ENCODE measurements at regions of chr6 and their contacts with region 1.

Region 1: DNA sequence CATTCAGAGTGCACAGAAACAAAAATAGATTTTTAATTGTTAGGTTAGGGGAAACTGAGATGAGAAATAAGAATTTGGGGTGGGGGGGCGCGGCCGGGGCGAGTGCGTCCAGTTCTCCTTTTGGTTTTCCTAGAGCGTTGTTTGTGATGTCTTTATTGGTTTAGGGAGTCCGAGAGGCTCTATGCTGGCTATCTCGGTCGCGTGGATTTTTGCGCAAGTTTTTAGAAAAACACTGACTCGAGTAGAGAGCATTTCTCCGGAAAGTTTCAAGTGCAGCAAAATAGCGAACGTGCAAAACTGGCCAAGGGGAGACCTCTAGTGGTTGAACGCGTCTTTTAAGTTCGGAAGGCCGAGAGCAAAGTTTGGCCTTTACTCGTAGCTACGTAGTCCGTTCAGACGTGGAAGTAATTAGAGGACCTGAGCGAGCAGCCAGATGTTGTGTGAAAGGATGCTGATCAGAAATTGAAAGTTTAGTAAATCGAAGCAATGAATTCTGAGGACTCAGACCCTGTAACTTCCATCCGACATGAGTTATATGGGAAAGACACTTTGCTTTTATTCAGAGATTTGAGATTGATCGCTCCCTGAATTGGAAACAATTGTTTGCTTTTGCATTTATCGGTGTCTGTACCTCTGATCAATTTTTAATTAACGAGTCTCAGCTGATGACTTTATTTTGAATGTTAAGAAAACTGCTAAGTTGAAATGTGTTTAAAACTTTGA is 2.7 kb downstream of the L3MBTL3 start:
- DNase-seq: peak; percentile 91
- ATAC-seq: peak; percentile 62
- H3K4me3 Mint-ChIP-seq: peak overlapping the region; percentile 96
- H3K27ac Mint-ChIP-seq: peak overlapping the region; percentile 98
- H3K4me1 Mint-ChIP-seq: peaks cover 48% of the 10 kb centered on the region
- H3K27me3 Mint-ChIP-seq: no peaks in the 10 kb centered on the region

Region 2: DNA sequence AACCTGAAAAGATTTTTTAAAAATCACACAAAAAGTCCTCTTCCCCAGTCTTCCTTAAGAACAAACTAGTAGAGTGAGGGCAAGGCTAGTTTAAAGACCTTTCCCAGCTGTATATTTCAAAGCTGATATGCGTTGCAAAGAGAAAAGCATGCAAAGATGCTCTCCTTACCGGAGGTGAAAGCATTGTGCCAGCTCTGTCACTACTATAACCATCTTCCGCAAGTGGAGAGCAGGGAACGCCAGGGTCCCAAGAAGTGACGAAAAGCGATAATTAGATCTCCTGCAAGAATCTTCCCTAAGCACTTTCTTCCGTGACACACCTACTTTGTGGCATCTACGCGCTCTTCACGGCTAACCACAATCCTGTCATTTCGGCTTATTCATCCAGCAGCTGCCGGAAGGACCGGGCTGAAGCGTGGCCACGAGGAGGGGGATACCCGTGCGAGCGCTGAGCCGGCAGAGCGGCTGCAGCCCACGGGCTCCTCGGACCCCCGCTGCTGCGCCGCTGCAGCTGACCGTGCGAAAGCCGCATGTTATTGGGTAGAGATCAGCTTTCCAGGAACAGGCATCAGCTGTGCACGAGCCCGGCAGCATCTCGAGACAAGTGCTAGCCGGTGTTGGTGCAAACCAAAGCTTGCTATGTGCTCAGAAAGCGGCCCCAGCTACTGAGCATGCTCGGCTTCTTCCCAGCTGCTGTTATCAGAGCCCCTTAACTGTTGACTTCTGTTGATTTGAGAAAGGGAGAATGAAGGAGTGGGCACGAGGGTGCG is 253.9 kb before region 1 on chr6:
- CTCF ChIA-PET with region 1: interaction called, 11 read pairs
- POLR2A ChIA-PET with region 1: no interaction called
- DNase-seq: peak; percentile 77
- ATAC-seq: peak; percentile 88
- H3K4me3 Mint-ChIP-seq: peak overlapping the region; percentile 79
- H3K27ac Mint-ChIP-seq: peak overlapping the region; percentile 48
- H3K4me1 Mint-ChIP-seq: peaks cover 25% of the 10 kb centered on the region
- H3K27me3 Mint-ChIP-seq: peaks cover 41% of the 10 kb centered on the region

Region 3: GRCh38 chr6:129893640-129894039 is 127.4 kb before region 1 on chr6:
- CTCF ChIA-PET with region 1: interaction called, 18 read pairs
- POLR2A ChIA-PET with region 1: no interaction called
- DNase-seq: no peak
- ATAC-seq: no peak
- H3K4me3 Mint-ChIP-seq: no peak overlapping the region
- H3K27ac Mint-ChIP-seq: no peak overlapping the region
- H3K4me1 Mint-ChIP-seq: peaks cover 5% of the 10 kb centered on the region
- H3K27me3 Mint-ChIP-seq: peaks cover 5% of the 10 kb centered on the region

Region 4: DNA sequence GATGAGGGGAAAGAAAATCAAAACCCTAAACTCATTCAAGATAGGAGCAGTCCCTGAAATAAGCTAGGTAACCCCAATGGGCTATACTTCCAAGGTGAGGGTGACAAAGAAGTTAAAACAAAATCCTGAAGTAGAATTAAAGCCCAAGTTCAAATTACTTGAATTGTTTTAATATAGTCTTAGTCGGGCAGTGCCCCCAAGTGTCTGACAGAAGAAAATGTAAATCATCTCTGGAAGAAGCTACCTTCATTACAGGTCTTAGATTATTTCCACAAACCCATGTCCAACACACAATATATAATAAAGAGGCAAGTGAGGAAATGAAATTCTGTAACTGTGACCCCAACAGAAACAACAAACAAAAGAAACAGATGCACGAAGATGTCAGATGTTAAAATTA is 39.5 kb before region 1 on chr6:
- CTCF ChIA-PET with region 1: interaction called, 10 read pairs
- POLR2A ChIA-PET with region 1: no interaction called
- DNase-seq: no peak
- ATAC-seq: no peak
- H3K4me3 Mint-ChIP-seq: no peak overlapping the region
- H3K27ac Mint-ChIP-seq: no peak overlapping the region
- H3K4me1 Mint-ChIP-seq: no peaks in the 10 kb centered on the region
- H3K27me3 Mint-ChIP-seq: peaks cover 5% of the 10 kb centered on the region

Region 5: GRCh38 chr6:130037207-130037811 is 16.2 kb after region 1 on chr6:
- CTCF ChIA-PET with region 1: interaction called, 23 read pairs
- POLR2A ChIA-PET with region 1: interaction called, 4 read pairs
- DNase-seq: no peak
- ATAC-seq: no peak
- H3K4me3 Mint-ChIP-seq: no peak overlapping the region
- H3K27ac Mint-ChIP-seq: no peak overlapping the region
- H3K4me1 Mint-ChIP-seq: peaks cover 64% of the 10 kb centered on the region
- H3K27me3 Mint-ChIP-seq: no peaks in the 10 kb centered on the region

Region 6: GRCh38 chr6:130115036-130115435 is 94.0 kb after region 1 on chr6:
- CTCF ChIA-PET with region 1: no interaction called
- POLR2A ChIA-PET with region 1: no interaction called
- DNase-seq: no peak
- ATAC-seq: no peak
- H3K4me3 Mint-ChIP-seq: no peak overlapping the region
- H3K27ac Mint-ChIP-seq: no peak overlapping the region
- H3K4me1 Mint-ChIP-seq: no peaks in the 10 kb centered on the region
- H3K27me3 Mint-ChIP-seq: no peaks in the 10 kb centered on the region